Heart left ventricle (tissue), 16 donors: ENCODE measurements at regions of chr5 and their contacts with region 1.

Region 1: GRCh38 chr5:57383093-57383861 is 99.3 kb downstream of the ACTBL2 start:
- DNase-seq: peak in 1 of 5 donors; percentile 33
- ATAC-seq: peak in 3 of 4 donors; percentile 54 to 70 (median 66)
- H3K4me3 ChIP-seq: no peak overlapping the region
- H3K27ac ChIP-seq: no peak overlapping the region
- H3K4me1 ChIP-seq: peaks cover 0 to 12% (median 0%) of the 10 kb centered on the region in 12 donors
- H3K27me3 ChIP-seq: no peaks in the 10 kb centered on the region
- CTCF ChIP-seq: peak in 3 of 12 donors; percentile 13 to 21 (median 20)
- POLR2A ChIP-seq: no peak

Region 2: GRCh38 chr5:57313716-57314115 is 69.6 kb before region 1 on chr5:
- intact Hi-C with region 1: loop called in 1 of 10 experiments (anchors 2 kb)
- DNase-seq: no peak
- ATAC-seq: no peak
- H3K4me3 ChIP-seq: no peak overlapping the region
- H3K27ac ChIP-seq: no peak overlapping the region
- H3K4me1 ChIP-seq: peaks cover 0 to 6% (median 0%) of the 10 kb centered on the region in 12 donors
- H3K27me3 ChIP-seq: no peaks in the 10 kb centered on the region
- CTCF ChIP-seq: no peak
- POLR2A ChIP-seq: no peak

Region 3: DNA sequence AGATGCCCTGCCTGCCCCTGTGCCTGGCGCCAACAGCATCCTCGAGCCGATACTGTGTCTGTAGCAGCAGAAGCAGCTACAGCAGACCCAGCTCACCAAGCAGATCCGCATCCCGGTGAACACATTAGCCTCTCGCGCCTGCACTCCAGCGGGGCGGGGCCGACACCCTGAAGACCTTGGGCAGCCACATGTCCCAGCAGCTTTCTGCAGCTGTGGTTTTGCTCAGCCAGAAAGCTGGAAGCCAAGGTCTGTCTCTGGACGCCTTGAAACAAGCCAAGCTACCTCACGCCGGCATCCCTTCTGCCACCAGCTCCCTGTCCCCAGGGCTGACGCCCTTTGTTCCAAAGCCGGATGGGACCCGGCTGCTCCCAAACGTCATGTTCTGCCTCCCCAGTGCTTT is 39.7 kb after region 1 on chr5:
- intact Hi-C with region 1: loop called in 1 of 10 experiments (anchors 5 kb)
- DNase-seq: peak; percentile 39 to 82 (median 51)
- ATAC-seq: peak; percentile 32 to 78 (median 68)
- H3K4me3 ChIP-seq: peak overlapping the region in 1 of 12 donors; percentile 31
- H3K27ac ChIP-seq: no peak overlapping the region
- H3K4me1 ChIP-seq: no peaks in the 10 kb centered on the region
- H3K27me3 ChIP-seq: no peaks in the 10 kb centered on the region
- CTCF ChIP-seq: no peak
- POLR2A ChIP-seq: no peak

Region 4: GRCh38 chr5:57749396-57749795 is 366.1 kb after region 1 on chr5:
- intact Hi-C with region 1: loop called in 1 of 10 experiments (anchors 10 kb)
- DNase-seq: no peak
- ATAC-seq: no peak
- H3K4me3 ChIP-seq: no peak overlapping the region
- H3K27ac ChIP-seq: no peak overlapping the region
- H3K4me1 ChIP-seq: no peaks in the 10 kb centered on the region
- H3K27me3 ChIP-seq: no peaks in the 10 kb centered on the region
- CTCF ChIP-seq: no peak
- POLR2A ChIP-seq: no peak